ENCODE measurements at regions of chr1 and their contacts with region 1.

Region 1: GRCh38 chr1:203273206-203273868 is 32.0 kb upstream of the BTG2 start:
- DNase-seq: peak; percentile 90
- H3K4me3 ChIP-seq: no peak overlapping the region
- H3K27ac ChIP-seq: peak overlapping the region; percentile 30
- H3K4me1 ChIP-seq: peaks cover 33% of the 10 kb centered on the region
- H3K27me3 ChIP-seq: no peaks in the 10 kb centered on the region
- CTCF ChIP-seq: peak; percentile 99

Region 2: DNA sequence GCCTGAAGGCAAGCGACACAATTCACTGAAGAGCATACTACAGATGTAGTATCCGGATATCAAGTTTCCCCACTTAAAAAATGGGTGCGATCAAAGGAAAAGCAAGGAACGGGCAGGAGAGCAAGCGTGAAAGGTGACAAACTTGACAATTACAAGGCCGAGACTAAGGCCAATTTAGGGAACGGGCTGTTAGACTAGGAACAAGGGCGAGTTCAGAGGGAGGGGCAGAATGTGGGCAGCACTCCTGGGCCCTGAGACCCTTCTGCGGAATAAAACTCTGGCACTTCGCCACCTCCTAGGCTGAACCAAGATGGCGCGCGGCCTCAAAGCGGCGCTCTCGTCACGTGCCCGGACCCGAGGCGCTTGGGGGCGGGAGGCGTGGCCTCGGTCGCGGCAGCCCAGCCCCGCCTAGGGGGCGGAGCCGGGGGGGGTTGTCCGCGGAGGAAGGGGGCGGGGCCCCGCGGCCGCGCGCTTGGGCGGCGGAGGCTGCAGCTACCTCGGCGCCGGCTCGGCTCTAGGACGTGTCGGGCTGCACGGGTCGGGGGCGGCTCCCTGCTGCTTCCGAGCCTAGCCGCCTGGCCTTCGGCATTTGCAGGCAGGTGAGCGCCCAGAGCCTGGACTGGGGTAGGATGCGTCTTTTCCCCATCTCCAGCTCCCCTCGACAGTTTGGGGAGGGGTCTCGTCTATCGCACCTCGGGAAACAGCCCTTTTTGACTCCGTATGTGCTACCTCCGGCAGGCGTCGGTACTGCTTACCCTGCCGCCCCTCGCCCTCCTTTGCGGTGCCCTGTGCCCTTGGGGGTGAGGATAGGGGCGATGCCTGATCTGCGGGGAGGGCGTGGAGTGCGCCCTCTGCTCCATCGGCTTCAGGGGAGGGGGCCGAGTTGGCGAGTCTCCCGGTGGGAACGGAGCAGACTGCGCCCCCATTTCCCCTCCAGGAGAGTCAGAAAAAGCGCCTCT is 247.0 kb before region 1 on chr1 and contains the start of gene PPFIA4:
- dilution Hi-C with region 1: loop called (anchors 25 kb)
- DNase-seq: no peak
- H3K4me3 ChIP-seq: peak within 1 kb of the TSS; percentile 56 to 73 (median 71)
- H3K27ac ChIP-seq: peak within 1 kb of the TSS; percentile 55
- H3K4me1 ChIP-seq: peaks cover 7% of the 10 kb centered on the region
- H3K27me3 ChIP-seq: peaks cover 11% of the 10 kb centered on the region
- CTCF ChIP-seq: peak in 1 of 3 experiments; percentile 39
- polyA plus RNA-seq, gene PPFIA4: 0.63 to 4.2 TPM (median 2.3 TPM) in 3 replicates

Region 3: DNA sequence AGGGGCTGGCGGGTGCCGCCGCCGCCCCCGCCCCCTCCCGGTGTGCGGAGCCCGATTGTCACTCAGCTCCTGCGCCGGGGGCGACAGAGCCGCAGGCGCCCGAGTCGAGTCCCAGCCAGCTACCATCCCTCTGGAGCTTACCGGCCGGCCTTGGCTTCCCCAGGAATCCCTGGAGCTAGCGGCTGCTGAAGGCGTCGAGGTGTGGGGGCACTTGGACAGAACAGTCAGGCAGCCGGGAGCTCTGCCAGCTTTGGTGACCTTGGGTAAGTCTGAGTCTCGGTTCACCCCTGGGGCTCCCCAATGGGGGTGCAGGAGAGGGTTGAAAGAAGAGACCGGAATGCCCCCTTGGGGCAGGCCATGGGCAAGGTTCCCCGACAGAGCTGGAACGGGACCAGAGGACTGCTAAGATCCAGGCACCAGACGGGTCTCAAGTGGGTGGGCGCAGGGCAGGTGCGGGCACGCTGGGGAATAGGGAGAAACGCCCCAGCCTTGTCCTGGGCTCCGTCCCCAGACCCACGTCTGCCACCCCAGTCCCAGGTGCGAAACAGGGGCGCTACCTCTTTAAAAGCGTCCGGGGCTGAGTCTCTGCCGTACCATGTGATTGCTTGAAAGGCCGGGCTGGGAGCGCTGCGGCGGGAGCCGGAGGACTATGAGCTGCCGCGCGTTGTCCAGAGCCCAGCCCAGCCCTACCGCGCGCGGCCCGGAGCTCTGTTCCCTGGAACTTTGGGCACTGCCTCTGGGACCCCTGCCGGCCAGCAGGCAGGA is 145.5 kb before region 1 on chr1 and contains the start of gene ADORA1:
- dilution Hi-C with region 1: no loop called
- DNase-seq: no peak
- H3K4me3 ChIP-seq: peak within 1 kb of the TSS; percentile 15 to 49 (median 18)
- H3K27ac ChIP-seq: no peak within 1 kb of the TSS
- H3K4me1 ChIP-seq: peaks cover 5% of the 10 kb centered on the region
- H3K27me3 ChIP-seq: peaks cover 56% of the 10 kb centered on the region
- CTCF ChIP-seq: no peak
- polyA plus RNA-seq, gene ADORA1: 0.07 to 0.10 TPM (median 0.09 TPM) in 3 replicates